ENCODE measurements at regions of chr1 and their contacts with region 1.

Region 1: DNA sequence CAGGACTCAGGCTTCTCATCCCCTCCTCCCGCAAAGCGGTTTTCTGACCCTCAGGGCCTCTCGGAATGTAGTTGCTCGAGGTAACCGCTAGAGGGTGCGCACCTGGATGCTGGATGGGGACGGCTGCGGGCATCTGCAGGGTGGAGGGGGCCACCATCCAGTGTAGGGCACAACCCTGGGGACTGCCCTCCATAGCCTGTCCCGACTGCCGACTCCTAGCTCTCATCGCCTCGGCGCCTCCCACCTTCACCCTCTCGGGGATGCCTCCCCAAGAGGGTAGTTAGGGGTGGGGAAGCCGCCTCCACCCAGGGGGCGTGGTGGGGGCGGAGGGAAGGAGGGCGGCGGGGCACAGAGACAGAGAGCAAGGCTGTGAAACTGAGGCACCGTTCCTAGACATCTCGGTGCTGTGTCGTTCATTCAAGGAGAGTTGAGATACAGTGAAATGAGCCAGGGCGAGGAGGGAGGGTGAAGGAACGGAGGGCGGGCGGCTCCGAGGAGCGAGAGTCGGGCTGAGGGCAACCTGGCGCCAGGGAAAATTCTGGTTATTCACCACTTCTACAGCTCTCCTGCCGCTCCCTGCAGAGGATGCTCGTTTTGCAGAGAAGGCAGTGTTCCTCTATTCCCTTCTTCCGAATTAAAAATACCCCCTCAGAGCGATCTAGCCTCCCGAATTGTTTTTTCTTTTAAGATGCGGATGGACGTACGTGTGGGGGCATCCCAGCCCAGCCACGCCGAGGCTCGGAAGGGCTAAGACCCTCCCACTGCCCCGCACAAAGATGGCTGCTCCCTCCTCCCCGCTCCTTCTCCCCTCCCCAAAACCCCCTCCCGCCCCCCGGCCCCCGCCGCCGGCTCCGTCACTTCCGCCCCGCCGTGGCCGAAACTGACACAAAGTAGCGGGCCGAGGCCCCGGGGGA is at the start of gene ATP8B2:
- DNase-seq: peak; percentile 63 to 91 (median 82)
- ATAC-seq: peak; percentile 59
- H3K4me3 ChIP-seq: peak within 1 kb of the TSS; percentile 94 to 98
- H3K4me3 Mint-ChIP-seq: peak within 1 kb of the TSS; percentile 96
- H3K27ac ChIP-seq: peak within 1 kb of the TSS; percentile 69 to 87
- H3K27ac Mint-ChIP-seq: peak within 1 kb of the TSS; percentile 93
- H3K4me1 ChIP-seq: peaks cover 43% of the 10 kb centered on the region
- H3K4me1 Mint-ChIP-seq: peaks cover 47% of the 10 kb centered on the region
- H3K27me3 ChIP-seq: no peaks in the 10 kb centered on the region
- H3K27me3 Mint-ChIP-seq: peaks cover 6% of the 10 kb centered on the region
- CTCF ChIP-seq: peak; percentile 96
- total RNA-seq, gene ATP8B2: 51.1 to 58.4 TPM

Region 2: GRCh38 chr1:154220071-154220969 is 104.6 kb before region 1 on chr1 and contains the start of gene UBAP2L:
- CTCF ChIA-PET with region 1: interaction called, 3 read pairs
- POLR2A ChIA-PET with region 1: interaction called, 4 read pairs
- intact Hi-C with region 1: loop called (anchors 1 to 2 kb)
- DNase-seq: peak; percentile 97 to 100 (median 99)
- ATAC-seq: peak; percentile 82
- H3K4me3 ChIP-seq: peak within 1 kb of the TSS; percentile 68 to 93
- H3K4me3 Mint-ChIP-seq: peak within 1 kb of the TSS; percentile 95
- H3K27ac ChIP-seq: peak within 1 kb of the TSS; percentile 93 to 99
- H3K27ac Mint-ChIP-seq: peak within 1 kb of the TSS; percentile 99
- H3K4me1 ChIP-seq: peaks cover 54% of the 10 kb centered on the region
- H3K4me1 Mint-ChIP-seq: peaks cover 71% of the 10 kb centered on the region
- H3K27me3 ChIP-seq: no peaks in the 10 kb centered on the region
- H3K27me3 Mint-ChIP-seq: no peaks in the 10 kb centered on the region
- CTCF ChIP-seq: no peak
- total RNA-seq, gene UBAP2L: 212 to 226 TPM

Region 3: GRCh38 chr1:154335025-154335714 is 10.2 kb after region 1 on chr1:
- CTCF ChIA-PET with region 1: interaction called, 139 read pairs
- POLR2A ChIA-PET with region 1: interaction called, 47 read pairs
- intact Hi-C with region 1: loop called (anchors 1 kb)
- DNase-seq: peak; percentile 78 to 95 (median 93)
- ATAC-seq: peak; percentile 94
- H3K4me3 ChIP-seq: no peak overlapping the region
- H3K4me3 Mint-ChIP-seq: peak overlapping the region; percentile 48
- H3K27ac ChIP-seq: peak overlapping the region; percentile 22 to 75
- H3K27ac Mint-ChIP-seq: peak overlapping the region; percentile 95
- H3K4me1 ChIP-seq: peaks cover 78% of the 10 kb centered on the region
- H3K4me1 Mint-ChIP-seq: peaks cover 75% of the 10 kb centered on the region
- H3K27me3 ChIP-seq: no peaks in the 10 kb centered on the region
- H3K27me3 Mint-ChIP-seq: no peaks in the 10 kb centered on the region
- CTCF ChIP-seq: peak; percentile 88

Region 4: GRCh38 chr1:154546264-154547063 is 221.5 kb after region 1 on chr1:
- CTCF ChIA-PET with region 1: no interaction called
- POLR2A ChIA-PET with region 1: no interaction called
- intact Hi-C with region 1: loop called in 1 of 2 experiments (anchors 1 kb)
- DNase-seq: peak; percentile 10 to 72 (median 52)
- ATAC-seq: peak; percentile 97
- H3K4me3 ChIP-seq: no peak overlapping the region
- H3K4me3 Mint-ChIP-seq: no peak overlapping the region
- H3K27ac ChIP-seq: no peak overlapping the region
- H3K27ac Mint-ChIP-seq: no peak overlapping the region
- H3K4me1 ChIP-seq: no peaks in the 10 kb centered on the region
- H3K4me1 Mint-ChIP-seq: peaks cover 15% of the 10 kb centered on the region
- H3K27me3 ChIP-seq: no peaks in the 10 kb centered on the region
- H3K27me3 Mint-ChIP-seq: peaks cover 3% of the 10 kb centered on the region
- CTCF ChIP-seq: peak; percentile 61

Region 5: GRCh38 chr1:154925335-154926170 is 600.6 kb after region 1 on chr1:
- CTCF ChIA-PET with region 1: no interaction called
- POLR2A ChIA-PET with region 1: no interaction called
- intact Hi-C with region 1: no loop called
- DNase-seq: no peak
- ATAC-seq: no peak
- H3K4me3 ChIP-seq: no peak overlapping the region
- H3K4me3 Mint-ChIP-seq: no peak overlapping the region
- H3K27ac ChIP-seq: no peak overlapping the region
- H3K27ac Mint-ChIP-seq: peak overlapping the region; percentile 18
- H3K4me1 ChIP-seq: no peaks in the 10 kb centered on the region
- H3K4me1 Mint-ChIP-seq: peaks cover 9% of the 10 kb centered on the region
- H3K27me3 ChIP-seq: no peaks in the 10 kb centered on the region
- H3K27me3 Mint-ChIP-seq: no peaks in the 10 kb centered on the region
- CTCF ChIP-seq: no peak

Region 6: DNA sequence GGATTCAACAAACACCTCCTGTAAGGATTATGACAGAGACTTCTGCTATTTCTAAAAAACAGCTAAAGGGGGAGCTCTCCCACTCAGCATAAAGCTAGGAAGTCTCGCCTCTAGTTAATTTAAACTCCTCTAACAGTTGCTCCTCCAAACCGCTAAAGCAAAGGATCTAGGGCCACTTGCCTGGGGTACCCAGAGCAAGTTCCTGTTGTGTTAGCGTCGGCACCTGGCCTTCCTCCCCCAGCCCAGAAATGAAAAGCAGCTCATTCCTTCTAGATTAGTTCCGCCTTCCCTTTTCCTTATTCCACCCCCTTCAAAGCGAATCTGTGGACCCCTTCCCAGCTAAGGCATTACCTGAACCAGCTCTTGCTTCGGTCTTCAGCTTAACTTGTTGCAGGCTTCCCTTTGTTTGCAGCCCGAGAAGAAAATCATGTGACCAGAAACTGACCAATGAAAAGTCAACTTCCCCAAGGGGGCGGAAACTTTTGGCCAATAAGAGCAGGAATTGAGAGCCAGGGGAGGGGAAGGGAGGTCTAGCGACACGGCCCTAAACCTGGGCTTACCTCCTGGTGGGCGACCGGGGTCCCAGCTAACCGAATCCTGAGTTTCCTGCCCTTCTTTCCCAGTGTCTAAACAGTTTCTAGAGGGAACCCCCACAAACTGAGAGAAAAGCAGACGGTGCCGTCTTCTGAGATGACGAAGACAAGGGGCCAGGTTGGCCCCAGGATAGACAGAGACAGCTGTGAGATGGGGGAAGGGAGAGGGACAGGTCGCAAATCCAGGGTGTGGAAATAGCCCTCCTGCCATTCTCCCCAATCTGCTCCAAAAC is 631.0 kb after region 1 on chr1 and contains the start of gene PBXIP1:
- CTCF ChIA-PET with region 1: no interaction called
- POLR2A ChIA-PET with region 1: no interaction called
- intact Hi-C with region 1: loop called in 1 of 2 experiments (anchors 10 kb)
- DNase-seq: peak; percentile 65 to 96 (median 84)
- ATAC-seq: peak; percentile 40
- H3K4me3 ChIP-seq: peak within 1 kb of the TSS; percentile 71 to 76
- H3K4me3 Mint-ChIP-seq: peak within 1 kb of the TSS; percentile 99
- H3K27ac ChIP-seq: peak within 1 kb of the TSS; percentile 98
- H3K27ac Mint-ChIP-seq: peak within 1 kb of the TSS; percentile 99
- H3K4me1 ChIP-seq: peaks cover 60% of the 10 kb centered on the region
- H3K4me1 Mint-ChIP-seq: peaks cover 76% of the 10 kb centered on the region
- H3K27me3 ChIP-seq: no peaks in the 10 kb centered on the region
- H3K27me3 Mint-ChIP-seq: no peaks in the 10 kb centered on the region
- CTCF ChIP-seq: no peak
- total RNA-seq, gene PBXIP1: 315 to 319 TPM